ENCODE measurements at regions of chr5 and their contacts with region 1.

Region 1: GRCh38 chr5:6606884-6607558 is 25.8 kb downstream of the NSUN2 start:
- DNase-seq: no peak
- H3K4me3 ChIP-seq: no peak overlapping the region
- H3K27ac ChIP-seq: no peak overlapping the region
- H3K4me1 ChIP-seq: no peaks in the 10 kb centered on the region
- CTCF ChIP-seq: no peak

Region 2: GRCh38 chr5:6365142-6365976 is 241.7 kb before region 1 on chr5:
- CTCF ChIA-PET with region 1: no interaction called
- POLR2A ChIA-PET with region 1: no interaction called
- intact Hi-C with region 1: no loop called
- DNase-seq: no peak
- H3K4me3 ChIP-seq: no peak overlapping the region
- H3K27ac ChIP-seq: no peak overlapping the region
- H3K4me1 ChIP-seq: peaks cover 8% of the 10 kb centered on the region
- CTCF ChIP-seq: no peak

Region 3: DNA sequence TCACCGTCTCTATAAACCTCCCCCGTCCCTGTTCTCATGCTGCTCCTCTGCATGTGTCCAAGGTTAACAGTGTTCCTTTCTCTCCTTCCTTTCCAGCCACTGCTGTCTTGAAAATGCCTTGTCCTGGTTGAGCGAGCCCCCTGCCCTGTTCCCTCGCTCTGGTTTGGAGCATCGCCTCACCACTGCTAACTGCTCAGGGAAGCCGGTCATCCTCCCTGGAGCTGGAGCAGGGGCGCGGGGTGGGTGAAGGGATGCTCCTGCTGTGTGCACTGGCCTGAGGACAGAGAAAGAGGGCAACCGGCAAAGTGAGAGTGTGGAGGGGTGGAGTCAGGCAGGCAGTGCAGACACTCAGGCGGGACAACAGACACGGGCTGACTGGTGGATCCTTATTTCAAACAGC is 138.9 kb before region 1 on chr5:
- CTCF ChIA-PET with region 1: no interaction called
- POLR2A ChIA-PET with region 1: no interaction called
- intact Hi-C with region 1: no loop called
- DNase-seq: no peak
- H3K4me3 ChIP-seq: no peak overlapping the region
- H3K27ac ChIP-seq: no peak overlapping the region
- H3K4me1 ChIP-seq: peaks cover 19% of the 10 kb centered on the region
- CTCF ChIP-seq: no peak

Region 4: GRCh38 chr5:6745706-6746222 is 138.7 kb after region 1 on chr5:
- CTCF ChIA-PET with region 1: no interaction called
- POLR2A ChIA-PET with region 1: no interaction called
- intact Hi-C with region 1: loop called (anchors 5 kb)
- DNase-seq: peak; percentile 69
- H3K4me3 ChIP-seq: no peak overlapping the region
- H3K27ac ChIP-seq: no peak overlapping the region
- H3K4me1 ChIP-seq: peaks cover 11% of the 10 kb centered on the region
- CTCF ChIP-seq: peak; percentile 95

Region 5: GRCh38 chr5:7094626-7095025 is 487.6 kb after region 1 on chr5:
- CTCF ChIA-PET with region 1: no interaction called
- POLR2A ChIA-PET with region 1: no interaction called
- intact Hi-C with region 1: no loop called
- DNase-seq: peak; percentile 4
- H3K4me3 ChIP-seq: no peak overlapping the region
- H3K27ac ChIP-seq: no peak overlapping the region
- H3K4me1 ChIP-seq: no peaks in the 10 kb centered on the region
- CTCF ChIP-seq: no peak

Measured in OCI-LY7 (cell line).